ENCODE measurements at regions of chr2 and their contacts with region 1.

Region 1: GRCh38 chr2:143259368-143259958 is 130.2 kb downstream of the ARHGAP15 start:
- DNase-seq: peak; percentile 79
- H3K4me3 Mint-ChIP-seq: peak overlapping the region; percentile 63
- H3K27ac Mint-ChIP-seq: peak overlapping the region; percentile 89
- H3K4me1 Mint-ChIP-seq: peaks cover 85% of the 10 kb centered on the region
- H3K27me3 Mint-ChIP-seq: no peaks in the 10 kb centered on the region

Region 2: DNA sequence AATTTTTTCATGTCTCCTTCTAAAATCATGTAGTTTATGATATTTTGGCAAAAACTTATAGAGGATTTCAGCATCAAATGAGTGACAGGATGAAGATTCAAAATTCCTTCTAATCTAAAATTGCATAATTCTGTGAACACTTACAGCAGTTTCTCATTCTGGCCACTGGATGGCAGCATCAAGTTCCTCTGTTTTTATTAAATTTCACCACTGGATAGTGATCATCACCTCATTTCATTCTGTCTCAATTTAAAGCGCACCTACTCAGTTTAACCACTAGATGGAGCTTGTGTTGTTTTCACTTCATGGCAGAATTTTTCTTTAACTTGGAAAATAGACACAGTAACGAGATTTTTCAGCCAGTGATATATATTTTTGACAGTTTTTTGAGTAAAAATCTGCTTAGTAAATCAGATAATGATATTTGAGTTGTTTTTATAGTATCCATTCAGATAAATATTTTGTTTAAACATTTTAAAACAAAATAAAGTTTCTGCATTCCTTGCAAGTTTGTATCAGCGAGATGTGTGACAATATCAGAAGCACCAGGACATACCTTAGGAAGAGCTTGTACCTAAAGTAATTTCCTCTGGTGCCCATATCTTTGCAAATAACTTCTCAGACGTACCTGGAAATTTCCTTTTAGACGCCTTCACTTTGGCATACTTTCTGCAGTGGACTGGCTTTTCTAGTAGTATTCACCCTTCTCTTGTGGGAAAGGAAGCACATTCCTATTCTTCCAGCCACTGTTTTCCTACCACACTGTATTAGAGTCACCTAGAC is 225.0 kb before region 1 on chr2:
- CTCF ChIA-PET with region 1: interaction called, 44 read pairs
- POLR2A ChIA-PET with region 1: no interaction called
- intact Hi-C with region 1: loop called (anchors 1 kb)
- DNase-seq: peak; percentile 64
- H3K4me3 Mint-ChIP-seq: no peak overlapping the region
- H3K27ac Mint-ChIP-seq: no peak overlapping the region
- H3K4me1 Mint-ChIP-seq: peaks cover 8% of the 10 kb centered on the region
- H3K27me3 Mint-ChIP-seq: no peaks in the 10 kb centered on the region

Region 3: DNA sequence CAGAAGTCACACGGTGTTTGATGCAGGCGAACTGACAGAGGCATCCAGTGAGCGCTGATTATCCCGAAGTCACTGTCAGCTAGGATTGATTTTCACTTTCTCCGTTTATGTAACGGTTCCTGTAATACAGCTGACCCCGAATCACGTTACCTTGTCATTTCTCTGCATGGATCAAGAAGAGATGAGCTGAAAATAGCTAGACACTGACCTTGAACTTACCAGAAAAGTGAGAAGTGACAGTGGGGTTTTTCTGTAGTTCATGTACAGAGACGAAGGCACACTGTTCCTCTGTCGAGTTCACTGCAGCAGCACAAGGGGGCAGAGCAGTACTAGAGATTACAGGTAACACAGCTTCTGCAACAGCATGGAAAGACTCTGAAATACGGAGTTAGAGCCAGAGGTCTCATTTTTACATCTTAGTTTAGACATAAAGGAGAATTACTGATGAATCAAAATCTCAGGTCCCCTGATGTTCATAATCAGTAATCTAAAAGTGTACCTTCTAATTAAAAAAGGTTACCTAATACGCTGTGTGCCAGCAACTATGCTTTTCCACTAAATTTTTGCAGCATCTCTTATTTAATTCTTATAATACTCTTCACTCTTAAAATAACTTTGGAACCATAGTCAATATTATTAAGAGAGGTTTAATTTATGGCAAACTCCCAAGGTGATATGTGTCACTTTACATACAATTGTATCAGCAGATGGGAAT is 97.2 kb before region 1 on chr2:
- CTCF ChIA-PET with region 1: interaction called, 123 read pairs
- POLR2A ChIA-PET with region 1: interaction called, 4 read pairs
- intact Hi-C with region 1: loop called (anchors 1 kb)
- DNase-seq: peak; percentile 68
- H3K4me3 Mint-ChIP-seq: no peak overlapping the region
- H3K27ac Mint-ChIP-seq: peak overlapping the region; percentile 14
- H3K4me1 Mint-ChIP-seq: peaks cover 77% of the 10 kb centered on the region
- H3K27me3 Mint-ChIP-seq: no peaks in the 10 kb centered on the region

Region 4: DNA sequence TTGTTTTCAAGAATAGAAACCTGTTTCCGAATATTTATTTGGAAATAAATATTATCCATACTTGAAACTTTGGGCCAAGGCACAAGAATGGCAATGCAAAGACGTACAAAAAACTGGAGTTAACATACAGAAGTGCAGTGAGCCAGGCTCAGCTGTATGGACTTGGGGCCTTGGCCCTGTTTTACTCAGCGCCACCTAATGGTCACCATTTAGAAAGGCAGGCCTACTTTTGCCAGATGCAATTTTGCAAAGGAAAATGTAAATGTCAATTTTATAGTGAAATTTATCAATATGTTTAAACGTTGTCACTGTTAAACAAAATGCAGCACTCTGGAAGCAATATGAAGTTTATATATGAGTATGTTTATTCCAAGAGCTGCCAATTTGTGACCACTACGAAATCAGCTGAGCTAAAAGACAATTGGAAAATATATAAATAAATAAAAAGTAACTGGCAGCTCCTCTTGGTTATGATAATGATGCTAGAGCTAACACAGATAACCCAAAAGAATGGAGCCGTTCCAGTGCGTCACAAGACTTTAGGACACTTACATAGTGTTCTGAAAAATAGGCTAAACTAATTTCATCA is 24.7 kb after region 1 on chr2:
- CTCF ChIA-PET with region 1: interaction called, 71 read pairs
- POLR2A ChIA-PET with region 1: no interaction called
- intact Hi-C with region 1: loop called (anchors 1 kb)
- DNase-seq: peak; percentile 38
- H3K4me3 Mint-ChIP-seq: no peak overlapping the region
- H3K27ac Mint-ChIP-seq: peak overlapping the region; percentile 3
- H3K4me1 Mint-ChIP-seq: peaks cover 55% of the 10 kb centered on the region
- H3K27me3 Mint-ChIP-seq: no peaks in the 10 kb centered on the region

Region 5: DNA sequence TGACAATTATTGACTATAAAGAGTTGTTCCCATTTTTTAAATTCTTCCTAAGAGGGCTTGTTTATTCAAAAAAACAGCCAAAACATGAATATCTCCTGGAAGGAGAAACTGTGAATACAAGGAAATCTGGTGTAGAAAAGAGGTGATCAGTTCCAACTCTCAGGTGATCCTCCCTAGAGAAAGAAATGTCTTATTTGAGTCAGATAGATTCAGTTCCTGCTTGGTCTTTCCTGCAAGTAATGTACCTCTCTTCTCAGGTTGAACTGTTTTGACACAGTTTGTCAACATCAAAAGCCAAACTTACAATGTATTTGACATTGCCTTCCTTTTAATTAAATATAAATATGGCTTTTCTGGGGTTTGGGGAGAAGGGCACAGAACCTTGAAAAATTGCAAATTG is 437.2 kb after region 1 on chr2:
- CTCF ChIA-PET with region 1: no interaction called
- POLR2A ChIA-PET with region 1: no interaction called
- intact Hi-C with region 1: loop called (anchors 2 kb)
- DNase-seq: no peak
- H3K4me3 Mint-ChIP-seq: no peak overlapping the region
- H3K27ac Mint-ChIP-seq: no peak overlapping the region
- H3K4me1 Mint-ChIP-seq: peaks cover 70% of the 10 kb centered on the region
- H3K27me3 Mint-ChIP-seq: no peaks in the 10 kb centered on the region

Region 6: DNA sequence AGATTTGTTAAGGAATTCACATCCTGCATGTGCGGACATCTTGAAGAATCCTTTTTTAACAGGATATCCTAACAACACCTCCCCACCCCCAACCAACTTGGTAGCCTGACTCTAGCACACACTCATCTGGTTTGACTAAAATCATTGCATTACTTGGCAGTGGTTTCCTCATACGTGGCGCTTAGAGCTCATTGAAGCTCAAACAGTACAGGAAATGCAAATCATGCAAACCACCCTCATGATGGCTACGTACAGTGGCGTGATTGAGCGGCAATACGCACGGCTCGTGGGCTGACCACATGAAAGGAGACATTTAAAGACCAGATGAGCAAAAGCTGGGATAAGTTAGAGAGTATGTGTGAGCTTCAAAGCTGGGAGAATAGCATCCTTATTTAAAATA is 924.3 kb after region 1 on chr2:
- CTCF ChIA-PET with region 1: no interaction called
- POLR2A ChIA-PET with region 1: no interaction called
- intact Hi-C with region 1: loop called (anchors 2 kb)
- DNase-seq: peak; percentile 89
- H3K4me3 Mint-ChIP-seq: peak overlapping the region; percentile 52
- H3K27ac Mint-ChIP-seq: peak overlapping the region; percentile 87
- H3K4me1 Mint-ChIP-seq: peaks cover 37% of the 10 kb centered on the region
- H3K27me3 Mint-ChIP-seq: no peaks in the 10 kb centered on the region

Measured in activated CD4-positive, alpha-beta memory T cell treated with anti-CD3 and anti-CD28 coated beads for 36 hours (primary cell).